AG04450 (cell line): ENCODE measurements at regions of chr10 and their contacts with region 1.

Region 1: DNA sequence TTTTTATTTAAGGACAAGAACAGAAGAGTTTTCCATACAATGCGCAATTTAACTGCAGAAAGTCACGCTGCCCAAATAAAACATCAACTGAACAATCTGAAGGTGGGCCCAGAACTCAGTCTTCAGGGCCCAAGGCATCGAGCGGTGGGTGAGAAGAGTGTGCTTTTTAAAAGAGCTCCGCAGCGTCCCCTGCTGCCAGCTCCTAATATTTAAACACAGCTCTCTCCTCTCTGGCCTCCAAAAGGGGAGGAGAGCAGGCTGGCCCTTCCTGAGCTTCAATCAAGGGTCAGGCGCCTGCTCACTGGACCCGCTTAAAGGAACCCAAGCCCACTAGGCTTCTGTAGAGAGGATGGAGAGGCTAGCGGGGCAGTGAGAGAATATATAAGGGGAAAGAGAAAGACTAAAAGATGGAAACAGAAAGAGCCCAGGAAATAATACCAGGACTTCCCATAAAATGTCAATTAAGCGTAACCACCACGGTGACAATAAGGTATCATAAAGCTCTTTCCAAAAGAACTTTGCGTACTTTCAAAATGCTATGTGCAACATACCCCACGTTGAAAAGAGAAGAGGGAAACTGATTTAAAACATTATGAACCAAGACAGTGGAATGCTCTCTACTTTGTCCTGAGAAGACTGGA is 2.8 kb downstream of the FAM53B start:
- DNase-seq: no peak
- H3K4me3 ChIP-seq: no peak overlapping the region
- H3K27ac ChIP-seq: no peak overlapping the region
- H3K27me3 ChIP-seq: no peaks in the 10 kb centered on the region
- CTCF ChIP-seq: peak; percentile 86

Region 2: DNA sequence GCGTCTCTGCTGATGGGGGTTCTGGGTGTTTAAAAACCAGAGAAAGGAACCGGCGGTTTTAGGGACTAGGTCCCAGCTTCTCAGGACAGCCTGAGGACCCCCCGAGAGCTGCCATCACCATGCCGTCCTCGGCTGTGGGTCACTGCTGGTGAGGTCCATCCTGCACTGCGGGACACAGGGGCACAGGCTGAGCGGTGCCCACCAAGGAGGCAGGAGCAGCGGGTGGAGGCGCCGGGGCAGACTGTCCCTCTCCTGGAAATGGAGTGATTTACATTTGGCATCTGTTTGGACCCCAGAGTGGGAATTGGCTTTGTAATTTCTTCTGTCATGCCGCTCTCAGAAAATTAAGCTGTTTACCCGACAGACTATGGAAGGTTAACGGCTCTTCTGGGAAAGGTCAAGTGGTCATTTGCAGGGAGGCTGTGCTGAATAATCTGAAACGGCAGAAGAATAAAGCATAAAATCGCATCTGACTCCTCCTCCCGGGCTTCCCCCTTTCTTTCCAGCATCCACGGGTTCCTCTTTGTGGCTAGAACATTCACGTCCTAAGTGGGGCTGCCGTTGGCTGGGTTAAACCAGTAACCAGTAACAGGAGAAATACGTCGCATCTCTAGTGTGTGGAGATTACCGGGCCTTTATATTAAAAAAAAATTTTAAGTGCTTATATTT is 248.1 kb before region 1 on chr10:
- CTCF ChIA-PET with region 1: no interaction called
- POLR2A ChIA-PET with region 1: no interaction called
- DNase-seq: no peak
- H3K4me3 ChIP-seq: no peak overlapping the region
- H3K27ac ChIP-seq: no peak overlapping the region
- H3K27me3 ChIP-seq: no peaks in the 10 kb centered on the region
- CTCF ChIP-seq: no peak

Region 3: DNA sequence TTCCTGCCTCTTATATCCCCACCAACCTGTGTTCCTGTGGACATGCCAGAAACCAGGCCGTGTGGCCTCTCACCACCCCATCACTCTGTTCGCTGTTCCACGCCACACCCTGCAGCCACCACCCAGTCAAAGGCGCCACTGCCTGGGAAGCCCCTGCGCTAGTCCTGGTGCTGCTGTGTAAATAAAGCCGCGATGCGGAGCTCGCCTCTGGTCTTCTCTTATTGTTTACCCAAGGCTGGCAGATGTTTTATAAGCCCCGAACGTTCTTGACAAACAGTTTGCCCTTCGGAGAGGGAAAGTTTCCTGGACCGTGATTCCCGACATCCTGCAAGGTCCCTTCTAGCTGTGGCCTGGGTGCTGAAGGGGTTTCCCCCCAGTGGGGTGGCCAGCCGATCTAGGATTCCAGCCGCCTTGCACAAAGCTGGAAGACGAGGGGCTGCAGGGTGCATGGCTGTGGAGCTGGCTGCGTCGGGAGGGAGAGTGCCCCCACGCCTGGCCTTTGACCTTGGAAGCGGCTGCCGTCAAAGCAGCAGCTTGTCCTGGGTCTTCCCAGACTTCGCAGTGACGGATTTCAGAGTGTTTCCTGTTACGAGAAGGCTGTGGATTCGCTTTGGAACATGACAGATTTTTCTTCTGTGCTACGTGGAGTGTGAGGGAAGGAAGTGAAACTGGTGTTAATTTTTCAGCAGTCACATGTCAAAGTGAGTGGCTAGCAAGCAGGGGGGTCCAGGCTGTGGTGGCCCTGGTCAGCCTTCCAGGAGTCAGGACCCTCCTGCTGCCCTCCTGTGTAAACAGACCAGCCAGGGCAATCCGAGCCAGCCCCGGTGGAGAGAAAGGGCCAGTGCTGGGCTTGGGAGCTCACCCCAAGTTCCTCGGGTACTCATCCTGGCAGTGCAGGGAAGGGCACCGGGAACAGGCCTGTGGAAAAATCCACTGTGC is 218.2 kb before region 1 on chr10:
- CTCF ChIA-PET with region 1: interaction called, 39 read pairs
- POLR2A ChIA-PET with region 1: no interaction called
- DNase-seq: no peak
- H3K4me3 ChIP-seq: peak overlapping the region; percentile 22
- H3K27ac ChIP-seq: no peak overlapping the region
- H3K27me3 ChIP-seq: peaks cover 3% of the 10 kb centered on the region
- CTCF ChIP-seq: no peak

Region 4: DNA sequence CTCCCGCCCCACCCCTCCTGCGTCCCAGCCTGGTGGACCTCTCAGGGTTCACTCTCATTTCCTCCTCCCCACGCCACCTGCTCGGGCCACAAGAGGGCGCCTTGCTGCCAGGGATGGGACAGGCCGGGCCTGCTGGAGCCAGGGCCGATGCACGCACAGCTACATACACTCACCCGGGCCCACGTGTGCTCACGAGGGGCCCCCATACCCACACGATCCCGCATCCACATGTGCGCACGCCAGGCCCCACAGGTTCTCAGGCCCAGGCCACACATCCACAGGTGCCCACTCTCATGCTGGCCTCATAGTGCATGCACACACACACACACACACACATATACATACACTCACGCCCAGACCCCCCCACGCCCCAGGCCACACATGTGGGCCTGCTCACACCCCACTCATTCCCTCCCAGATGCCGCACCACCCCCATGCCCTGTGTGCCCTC is 211.2 kb before region 1 on chr10:
- CTCF ChIA-PET with region 1: interaction called, 101 read pairs
- POLR2A ChIA-PET with region 1: no interaction called
- DNase-seq: peak; percentile 52
- H3K4me3 ChIP-seq: no peak overlapping the region
- H3K27ac ChIP-seq: no peak overlapping the region
- H3K27me3 ChIP-seq: peaks cover 3% of the 10 kb centered on the region
- CTCF ChIP-seq: peak; percentile 93

Region 5: GRCh38 chr10:124539935-124540641 is 201.3 kb before region 1 on chr10:
- CTCF ChIA-PET with region 1: interaction called, 101 read pairs
- POLR2A ChIA-PET with region 1: no interaction called
- DNase-seq: no peak
- H3K4me3 ChIP-seq: no peak overlapping the region
- H3K27ac ChIP-seq: no peak overlapping the region
- H3K27me3 ChIP-seq: peaks cover 7% of the 10 kb centered on the region
- CTCF ChIP-seq: peak; percentile 78

Region 6: GRCh38 chr10:124632064-124632531 is 109.3 kb before region 1 on chr10:
- CTCF ChIA-PET with region 1: interaction called, 15 read pairs
- POLR2A ChIA-PET with region 1: no interaction called
- DNase-seq: no peak
- H3K4me3 ChIP-seq: no peak overlapping the region
- H3K27ac ChIP-seq: no peak overlapping the region
- H3K27me3 ChIP-seq: no peaks in the 10 kb centered on the region
- CTCF ChIP-seq: peak; percentile 29; the same call in 1 of the 2 replicates

Region 7: DNA sequence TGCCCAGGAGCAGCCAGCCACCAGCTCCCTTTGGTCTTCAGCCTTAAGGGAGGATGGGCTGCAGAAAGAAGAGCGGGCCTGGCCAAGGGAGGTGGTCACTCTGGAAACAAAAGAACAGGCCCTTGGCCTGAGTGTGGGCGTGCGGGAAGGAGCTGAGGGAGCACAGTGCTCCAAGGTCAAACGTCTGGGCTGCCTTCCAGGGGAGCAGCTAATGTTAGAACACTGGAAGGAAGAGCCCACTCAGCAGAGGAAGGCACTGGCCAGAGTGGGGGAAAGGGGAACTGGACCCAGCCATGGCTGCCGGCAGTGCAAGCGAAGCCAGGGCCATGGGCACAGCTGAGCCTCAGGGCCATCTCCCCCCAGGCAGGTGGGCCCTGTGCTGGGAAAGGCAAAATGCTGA is 40.0 kb before region 1 on chr10:
- CTCF ChIA-PET with region 1: interaction called, 15 read pairs
- POLR2A ChIA-PET with region 1: no interaction called
- DNase-seq: peak; percentile 11
- H3K4me3 ChIP-seq: no peak overlapping the region
- H3K27ac ChIP-seq: peak overlapping the region; percentile 31
- H3K27me3 ChIP-seq: no peaks in the 10 kb centered on the region
- CTCF ChIP-seq: no peak

Region 8: GRCh38 chr10:124755581-124755980 is 14.2 kb after region 1 on chr10:
- CTCF ChIA-PET with region 1: interaction called, 23 read pairs
- POLR2A ChIA-PET with region 1: no interaction called
- DNase-seq: no peak
- H3K4me3 ChIP-seq: no peak overlapping the region
- H3K27ac ChIP-seq: no peak overlapping the region
- H3K27me3 ChIP-seq: no peaks in the 10 kb centered on the region
- CTCF ChIP-seq: no peak

Region 9: DNA sequence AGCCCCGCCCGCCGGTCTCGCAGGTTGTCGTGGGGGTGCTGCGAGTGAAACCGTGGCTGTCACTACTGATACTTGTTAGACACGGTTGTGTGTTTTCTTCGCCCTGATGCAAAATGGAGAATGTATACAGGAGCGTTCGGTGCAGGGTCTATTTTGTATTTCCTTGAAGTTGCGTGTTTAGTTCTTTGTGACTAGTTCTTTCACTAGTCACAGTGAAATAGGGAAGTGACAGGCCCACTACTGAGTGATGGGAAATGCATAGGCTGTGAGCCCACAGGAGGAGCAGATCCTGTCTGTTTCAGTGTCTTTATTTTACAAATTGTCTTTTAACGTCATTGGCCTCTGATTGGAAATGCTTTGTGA is 60.9 kb after region 1 on chr10:
- CTCF ChIA-PET with region 1: no interaction called
- POLR2A ChIA-PET with region 1: no interaction called
- DNase-seq: no peak
- H3K4me3 ChIP-seq: peak overlapping the region; percentile 81
- H3K27ac ChIP-seq: peak overlapping the region; percentile 39
- H3K27me3 ChIP-seq: peaks cover 4% of the 10 kb centered on the region
- CTCF ChIP-seq: no peak

Region 10: DNA sequence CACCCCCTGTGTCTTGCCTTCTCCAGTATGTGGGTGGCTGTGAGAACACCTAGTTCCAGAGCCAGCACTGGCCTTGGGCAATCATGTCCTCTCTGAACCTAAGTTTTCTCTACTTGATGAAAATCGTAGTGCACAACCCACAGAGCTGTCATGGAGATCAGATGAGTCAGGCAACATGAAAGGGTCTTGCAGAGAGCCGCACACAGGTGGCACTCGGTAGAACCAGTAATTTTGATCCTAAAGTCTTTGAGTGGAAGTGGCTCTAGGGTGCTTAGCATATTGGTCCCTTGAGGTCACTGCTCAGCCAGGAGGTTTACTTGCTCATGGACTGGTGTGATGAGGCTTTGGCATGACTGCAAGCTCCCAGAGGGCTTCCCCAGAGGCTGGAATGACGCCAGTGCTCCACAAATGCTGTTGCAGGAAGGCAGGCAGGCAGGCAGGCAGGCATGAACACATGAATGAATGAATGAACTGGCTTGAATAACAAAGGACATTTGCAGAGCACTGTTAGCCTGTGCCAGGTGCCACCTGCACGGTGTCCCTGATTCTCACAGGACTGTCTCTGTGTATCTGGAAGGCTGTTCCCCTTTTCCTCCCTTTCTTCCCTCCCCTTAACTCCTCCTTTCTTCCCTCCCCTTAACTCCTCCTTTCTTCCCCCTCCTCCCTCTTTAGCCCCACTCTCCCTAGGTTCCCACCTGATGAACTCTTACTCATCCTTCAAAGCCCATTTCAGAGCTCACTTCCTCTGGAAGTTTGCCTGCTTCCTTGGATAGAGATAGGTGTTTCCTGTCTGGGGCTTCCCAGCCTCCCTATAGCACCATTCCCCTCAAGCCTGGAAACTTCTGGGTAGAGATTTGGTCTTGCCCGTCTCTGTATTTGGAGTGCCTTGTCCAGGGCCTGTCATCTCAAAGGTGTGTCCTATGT is 446.1 kb after region 1 on chr10:
- CTCF ChIA-PET with region 1: no interaction called
- POLR2A ChIA-PET with region 1: no interaction called
- DNase-seq: no peak
- H3K4me3 ChIP-seq: no peak overlapping the region
- H3K27ac ChIP-seq: no peak overlapping the region
- H3K27me3 ChIP-seq: peaks cover 14% of the 10 kb centered on the region
- CTCF ChIP-seq: no peak

Region 11: GRCh38 chr10:125316449-125316848 is 575.0 kb after region 1 on chr10:
- CTCF ChIA-PET with region 1: no interaction called
- POLR2A ChIA-PET with region 1: no interaction called
- DNase-seq: no peak
- H3K4me3 ChIP-seq: no peak overlapping the region
- H3K27ac ChIP-seq: no peak overlapping the region
- H3K27me3 ChIP-seq: peaks cover 4% of the 10 kb centered on the region
- CTCF ChIP-seq: no peak